ENCODE measurements at regions of chr14 and their contacts with region 1.

Region 1: GRCh38 chr14:68899033-68899603 is 80.0 kb downstream of the ACTN1 start:
- DNase-seq: peak in 3 of 35 experiments; percentile 4 to 19 (median 4)
- ATAC-seq: peak in 1 of 4 experiments; percentile 29
- H3K4me3 ChIP-seq: no peak overlapping the region
- H3K4me3 Mint-ChIP-seq: no peak overlapping the region
- H3K27ac ChIP-seq: peak overlapping the region; percentile 44
- H3K27ac Mint-ChIP-seq: peak overlapping the region; percentile 20 to 83
- H3K4me1 ChIP-seq: peaks cover 0 to 9% of the 10 kb centered on the region in 2 experiments
- H3K4me1 Mint-ChIP-seq: peaks cover 13 to 29% (median 14%) of the 10 kb centered on the region in 3 donors
- H3K27me3 ChIP-seq: no peaks in the 10 kb centered on the region
- H3K27me3 Mint-ChIP-seq: no peaks in the 10 kb centered on the region

Region 2: GRCh38 chr14:68757618-68758081 is 141.5 kb before region 1 on chr14:
- CTCF ChIA-PET with region 1: no interaction called
- POLR2A ChIA-PET with region 1: no interaction called
- DNase-seq: peak in 1 of 35 experiments; percentile 41
- ATAC-seq: peak in 1 of 4 experiments; percentile 50
- H3K4me3 ChIP-seq: no peak overlapping the region
- H3K4me3 Mint-ChIP-seq: no peak overlapping the region
- H3K27ac ChIP-seq: no peak overlapping the region
- H3K27ac Mint-ChIP-seq: no peak overlapping the region
- H3K4me1 ChIP-seq: peaks cover 4 to 13% of the 10 kb centered on the region in 2 experiments
- H3K4me1 Mint-ChIP-seq: peaks cover 16 to 21% (median 19%) of the 10 kb centered on the region in 3 donors
- H3K27me3 ChIP-seq: no peaks in the 10 kb centered on the region
- H3K27me3 Mint-ChIP-seq: no peaks in the 10 kb centered on the region

Region 3: GRCh38 chr14:68874746-68875155 is 24.4 kb before region 1 on chr14:
- CTCF ChIA-PET with region 1: no interaction called
- POLR2A ChIA-PET with region 1: interaction called in 1 of 2 experiments, 13 read pairs
- DNase-seq: no peak
- ATAC-seq: peak in 3 of 4 experiments; percentile 20 to 67 (median 48)
- H3K4me3 ChIP-seq: no peak overlapping the region
- H3K4me3 Mint-ChIP-seq: no peak overlapping the region
- H3K27ac ChIP-seq: no peak overlapping the region
- H3K27ac Mint-ChIP-seq: no peak overlapping the region
- H3K4me1 ChIP-seq: no peaks in the 10 kb centered on the region
- H3K4me1 Mint-ChIP-seq: no peaks in the 10 kb centered on the region
- H3K27me3 ChIP-seq: no peaks in the 10 kb centered on the region
- H3K27me3 Mint-ChIP-seq: no peaks in the 10 kb centered on the region